Heart right ventricle (tissue), 16 donors: ENCODE measurements at regions of chr1 and their contacts with region 1.

Region 1: DNA sequence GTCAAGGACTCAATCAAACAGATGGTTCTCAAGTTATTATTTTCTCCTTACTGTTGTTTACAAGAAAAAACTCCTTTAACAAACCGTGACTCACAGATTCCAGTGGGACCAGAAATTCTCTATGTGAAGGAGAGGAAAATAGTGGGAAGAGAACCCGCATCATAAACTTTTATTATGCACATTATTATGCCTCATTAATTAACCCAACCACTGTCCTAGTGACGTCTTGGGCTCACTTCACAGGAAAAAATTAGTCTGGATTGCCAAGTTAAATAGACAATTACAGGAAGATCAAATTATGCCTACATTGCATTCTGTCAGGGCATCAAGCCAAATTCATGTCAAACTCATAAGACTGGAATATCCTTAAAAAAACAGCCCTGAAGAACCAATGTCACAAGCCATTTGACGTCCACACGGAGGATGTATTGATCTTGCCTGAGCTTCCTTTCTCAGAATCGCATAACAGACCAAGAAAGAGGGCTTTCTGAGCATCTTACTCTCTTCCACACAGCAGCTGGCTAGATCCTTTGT is 347.8 kb downstream of the DUSP10 start:
- DNase-seq: peak in 1 of 2 donors; percentile 50
- ATAC-seq: peak; percentile 55 to 94 (median 84)
- H3K4me3 ChIP-seq: no peak overlapping the region
- H3K27ac ChIP-seq: peak overlapping the region in 8 of 10 donors; percentile 15 to 76 (median 46)
- H3K4me1 ChIP-seq: peaks cover 0 to 20% (median 9%) of the 10 kb centered on the region in 9 donors
- H3K27me3 ChIP-seq: no peaks in the 10 kb centered on the region
- CTCF ChIP-seq: no peak

Region 2: DNA sequence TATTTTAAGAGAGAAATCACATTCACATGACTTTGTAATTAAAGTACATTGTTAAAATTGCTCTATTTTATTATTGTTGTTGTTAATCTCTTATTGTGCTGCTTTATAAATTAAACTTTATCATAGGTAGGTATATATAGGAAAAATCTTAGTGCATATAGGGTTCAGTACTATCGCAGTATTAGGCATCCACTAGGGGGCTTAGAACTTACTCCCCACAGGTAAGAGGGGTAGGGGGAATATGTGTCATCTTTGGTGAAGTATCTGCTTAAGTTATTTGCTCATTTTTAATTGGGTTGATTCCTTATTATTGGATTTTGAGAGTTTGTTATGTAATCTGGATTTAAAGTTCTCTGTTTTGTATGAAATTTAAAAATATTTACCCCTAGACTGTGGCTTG is 37.4 kb before region 1 on chr1:
- intact Hi-C with region 1: no loop called
- DNase-seq: no peak
- ATAC-seq: no peak
- H3K4me3 ChIP-seq: no peak overlapping the region
- H3K27ac ChIP-seq: no peak overlapping the region
- H3K4me1 ChIP-seq: no peaks in the 10 kb centered on the region
- H3K27me3 ChIP-seq: no peaks in the 10 kb centered on the region
- CTCF ChIP-seq: no peak

Region 3: GRCh38 chr1:221408117-221408803 is 14.2 kb after region 1 on chr1:
- intact Hi-C with region 1: loop called in 1 of 10 experiments (anchors 1 kb)
- DNase-seq: no peak
- ATAC-seq: peak in 6 of 8 donors; percentile 12 to 61 (median 35)
- H3K4me3 ChIP-seq: no peak overlapping the region
- H3K27ac ChIP-seq: no peak overlapping the region
- H3K4me1 ChIP-seq: peaks cover 0 to 9% (median 0%) of the 10 kb centered on the region in 9 donors
- H3K27me3 ChIP-seq: peaks cover 0 to 3% (median 0%) of the 10 kb centered on the region in 7 donors
- CTCF ChIP-seq: no peak